ENCODE measurements at regions of chr13 and their contacts with region 1.

Region 1: GRCh38 chr13:99969919-99970621 is 1.5 kb downstream of the ZIC5 start:
- DNase-seq: peak; percentile 77
- H3K4me3 Mint-ChIP-seq: peak overlapping the region; percentile 70
- H3K27ac Mint-ChIP-seq: peak overlapping the region; percentile 80
- H3K4me1 Mint-ChIP-seq: peaks cover 17% of the 10 kb centered on the region
- H3K27me3 Mint-ChIP-seq: peaks cover 70% of the 10 kb centered on the region

Region 2: DNA sequence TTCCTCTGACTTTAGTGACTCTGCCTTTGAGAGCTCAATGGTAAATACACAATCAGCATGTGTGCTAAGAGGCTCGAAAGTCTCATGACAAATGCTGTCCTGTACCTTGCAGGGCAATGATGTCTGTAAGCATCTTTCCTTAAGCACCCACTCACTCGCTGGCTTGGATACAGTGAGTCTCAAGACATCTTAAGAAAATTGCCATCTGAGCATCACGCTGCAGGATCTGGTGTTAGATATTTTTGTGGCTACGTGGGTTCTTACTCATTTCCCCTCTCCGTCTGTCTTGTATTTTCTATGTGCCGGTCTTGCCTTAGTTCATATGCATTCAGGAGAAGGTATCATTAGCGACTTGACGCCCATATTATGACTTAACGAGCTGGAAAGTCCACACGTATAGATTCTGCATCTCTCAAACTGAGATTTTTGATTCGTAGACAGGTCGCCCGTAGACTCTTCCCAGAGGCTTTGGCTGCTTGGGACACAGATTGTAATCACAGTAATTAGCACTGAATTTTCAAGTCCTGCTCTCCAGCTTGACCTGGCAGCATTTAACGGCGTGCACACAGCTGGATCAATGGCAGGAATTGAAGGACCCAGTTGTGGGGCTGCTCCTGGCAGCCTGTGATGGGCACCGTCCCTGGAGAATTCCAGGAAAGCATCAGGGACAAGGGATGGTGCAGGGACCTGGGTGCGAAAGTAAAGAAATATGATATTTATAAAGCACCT is 229.7 kb before region 1 on chr13:
- intact Hi-C with region 1: no loop called
- DNase-seq: no peak
- H3K4me3 Mint-ChIP-seq: no peak overlapping the region
- H3K27ac Mint-ChIP-seq: no peak overlapping the region
- H3K4me1 Mint-ChIP-seq: no peaks in the 10 kb centered on the region
- H3K27me3 Mint-ChIP-seq: peaks cover 4% of the 10 kb centered on the region

Region 3: GRCh38 chr13:99895223-99895994 is 74.7 kb before region 1 on chr13:
- intact Hi-C with region 1: loop called (anchors 5 kb)
- DNase-seq: peak; percentile 67
- H3K4me3 Mint-ChIP-seq: peak overlapping the region; percentile 68
- H3K27ac Mint-ChIP-seq: no peak overlapping the region
- H3K4me1 Mint-ChIP-seq: peaks cover 8% of the 10 kb centered on the region
- H3K27me3 Mint-ChIP-seq: peaks cover 63% of the 10 kb centered on the region

Region 4: DNA sequence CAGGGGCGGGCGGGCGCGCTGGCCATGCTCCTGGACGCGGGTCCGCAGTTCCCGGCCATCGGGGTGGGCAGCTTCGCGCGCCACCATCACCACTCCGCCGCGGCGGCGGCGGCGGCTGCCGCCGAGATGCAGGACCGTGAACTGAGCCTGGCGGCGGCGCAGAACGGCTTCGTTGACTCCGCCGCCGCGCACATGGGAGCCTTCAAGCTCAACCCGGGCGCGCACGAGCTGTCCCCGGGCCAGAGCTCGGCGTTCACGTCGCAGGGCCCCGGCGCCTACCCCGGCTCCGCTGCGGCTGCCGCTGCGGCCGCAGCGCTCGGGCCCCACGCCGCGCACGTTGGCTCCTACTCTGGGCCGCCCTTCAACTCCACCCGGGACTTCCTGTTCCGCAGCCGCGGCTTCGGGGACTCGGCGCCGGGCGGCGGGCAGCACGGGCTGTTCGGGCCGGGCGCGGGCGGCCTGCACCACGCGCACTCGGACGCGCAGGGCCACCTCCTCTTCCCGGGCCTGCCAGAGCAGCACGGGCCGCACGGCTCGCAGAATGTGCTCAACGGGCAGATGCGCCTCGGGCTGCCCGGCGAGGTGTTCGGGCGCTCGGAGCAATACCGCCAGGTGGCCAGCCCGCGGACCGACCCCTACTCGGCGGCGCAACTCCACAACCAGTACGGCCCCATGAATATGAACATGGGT is 12.1 kb after region 1 on chr13:
- intact Hi-C with region 1: loop called (anchors 1 kb)
- DNase-seq: peak; percentile 73
- H3K4me3 Mint-ChIP-seq: no peak overlapping the region
- H3K27ac Mint-ChIP-seq: no peak overlapping the region
- H3K4me1 Mint-ChIP-seq: peaks cover 13% of the 10 kb centered on the region
- H3K27me3 Mint-ChIP-seq: peaks cover 61% of the 10 kb centered on the region